GM12878 (cell line): ENCODE measurements at regions of chr14 and their contacts with region 1.

Region 1: DNA sequence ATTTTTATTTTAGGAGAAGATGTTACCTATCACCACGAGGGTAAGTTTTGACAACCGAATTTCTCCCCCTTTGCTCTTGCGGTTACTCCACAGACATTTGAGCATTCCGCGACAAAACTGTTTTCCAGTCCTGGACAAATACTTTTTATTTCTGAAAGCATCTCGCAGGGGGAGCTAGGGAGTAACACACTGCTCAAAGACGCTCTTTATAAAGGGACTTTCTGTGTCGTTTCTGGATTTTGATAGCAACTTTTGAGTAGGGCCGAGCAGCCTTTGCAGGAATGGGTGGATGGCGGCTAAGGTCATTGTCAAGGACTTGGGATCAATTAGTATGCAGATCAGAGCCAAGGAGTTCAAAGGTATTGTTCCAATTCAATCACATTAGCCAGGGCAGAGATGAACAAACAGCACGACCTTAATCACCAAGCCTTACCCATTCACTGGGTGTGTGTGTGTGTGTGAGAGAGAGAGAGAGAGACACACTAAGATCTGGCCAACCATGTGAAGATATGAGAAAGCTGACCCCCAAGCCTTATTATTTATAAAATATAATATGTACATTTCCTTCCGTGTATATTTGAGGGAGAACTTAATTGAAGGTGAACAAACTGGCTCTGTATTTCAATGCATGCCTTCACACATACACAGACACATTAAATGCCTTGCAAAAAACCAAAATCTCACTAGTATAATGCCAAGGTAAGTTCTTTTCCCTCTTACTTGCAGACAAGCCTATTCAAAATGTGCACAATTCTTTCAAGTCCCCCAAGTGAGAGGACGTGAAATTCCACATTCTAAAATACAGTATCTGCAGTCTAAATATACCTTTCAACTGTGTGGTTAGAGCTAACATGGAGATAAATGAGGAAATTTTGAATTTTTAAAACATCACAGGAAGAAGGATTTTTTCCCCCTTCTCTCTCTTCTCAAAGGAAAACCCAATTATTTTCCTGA is 613.8 kb downstream of the VRK1 start:
- DNase-seq: no peak
- ATAC-seq: peak; percentile 37; the same call in 2 of the 3 replicates
- H3K4me3 ChIP-seq: no peak overlapping the region
- H3K27ac ChIP-seq: peak overlapping the region; percentile 53
- H3K4me1 ChIP-seq: peaks cover 13% of the 10 kb centered on the region
- H3K27me3 ChIP-seq: no peaks in the 10 kb centered on the region
- CTCF ChIP-seq: peak in 2 of 3 experiments; percentile 2 to 26; a peak in 1 of 6 replicates
- EP300 ChIP-seq: no peak
- POLR2A ChIP-seq: no peak
- RAD21 ChIP-seq: peak; percentile 43; the same call in 1 of the 2 replicates

Region 2: GRCh38 chr14:97196336-97196735 is 214.6 kb before region 1 on chr14:
- CTCF ChIA-PET with region 1: no interaction called
- POLR2A ChIA-PET with region 1: no interaction called
- RAD21 ChIA-PET with region 1: no interaction called
- SMC1A ChIA-PET with region 1: no interaction called
- in situ Hi-C with region 1: no loop called
- intact Hi-C with region 1: no loop called
- DNase-seq: no peak
- ATAC-seq: no peak
- H3K4me3 ChIP-seq: no peak overlapping the region
- H3K27ac ChIP-seq: no peak overlapping the region
- H3K4me1 ChIP-seq: no peaks in the 10 kb centered on the region
- H3K27me3 ChIP-seq: no peaks in the 10 kb centered on the region
- CTCF ChIP-seq: no peak
- EP300 ChIP-seq: no peak
- POLR2A ChIP-seq: no peak
- RAD21 ChIP-seq: no peak

Region 3: DNA sequence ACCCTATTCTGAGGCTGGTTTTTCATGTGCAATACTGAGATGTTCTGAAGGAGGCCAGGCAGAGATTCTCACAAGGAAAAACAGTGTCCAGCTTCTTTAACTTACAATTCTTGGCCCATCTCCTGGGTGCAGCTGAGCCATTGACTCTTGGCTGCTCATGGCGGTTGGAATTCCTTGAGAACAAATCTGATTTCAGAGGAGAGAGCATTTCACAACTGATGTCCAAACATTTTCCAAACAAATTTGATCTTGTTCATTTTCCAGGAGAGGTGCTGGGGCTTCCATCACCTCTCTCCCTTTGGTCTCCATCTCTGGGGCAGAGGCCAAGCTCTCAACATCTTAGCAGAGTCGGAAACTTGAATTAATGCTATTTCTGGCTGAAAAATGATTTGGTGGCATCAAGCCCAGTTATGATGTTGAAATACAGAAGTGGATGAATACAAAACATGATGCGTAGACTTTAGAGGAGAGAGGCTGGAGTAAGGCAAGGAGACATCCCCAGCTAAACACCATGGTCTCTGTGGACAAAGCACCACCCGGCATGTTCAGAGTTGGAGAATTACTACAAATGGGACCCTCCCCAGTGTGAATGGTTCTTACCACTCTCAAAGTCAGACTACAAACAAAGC is 20.7 kb before region 1 on chr14:
- CTCF ChIA-PET with region 1: interaction called, 5 read pairs
- POLR2A ChIA-PET with region 1: interaction called, 15 read pairs
- RAD21 ChIA-PET with region 1: interaction called, 83 read pairs
- SMC1A ChIA-PET with region 1: interaction called, 115 read pairs
- in situ Hi-C with region 1: no loop called
- intact Hi-C with region 1: no loop called
- DNase-seq: no peak
- ATAC-seq: no peak
- H3K4me3 ChIP-seq: no peak overlapping the region
- H3K27ac ChIP-seq: no peak overlapping the region
- H3K4me1 ChIP-seq: peaks cover 13% of the 10 kb centered on the region; the same call in 1 of the 2 replicates
- H3K27me3 ChIP-seq: no peaks in the 10 kb centered on the region
- CTCF ChIP-seq: no peak
- EP300 ChIP-seq: no peak
- POLR2A ChIP-seq: no peak
- RAD21 ChIP-seq: no peak

Region 4: DNA sequence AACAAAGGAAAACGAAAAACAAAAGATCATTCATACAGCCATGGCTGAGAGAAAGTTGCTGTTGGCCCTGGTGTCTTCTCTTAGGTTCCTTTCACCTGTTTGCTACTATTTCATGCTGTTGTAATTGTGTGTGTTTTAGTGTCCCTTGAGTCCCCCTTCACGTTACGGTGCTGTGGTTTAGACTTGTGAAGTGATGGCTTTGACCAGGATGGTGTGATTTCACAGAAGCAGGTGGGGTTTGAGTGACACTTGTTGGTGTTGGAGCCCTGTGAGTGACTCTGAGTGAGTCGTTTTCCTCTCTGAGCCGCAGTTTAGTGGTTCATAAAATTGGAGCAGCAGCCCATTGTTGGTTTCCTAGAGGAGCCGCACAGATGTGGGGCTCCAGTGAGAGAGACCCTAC is 21.6 kb after region 1 on chr14:
- CTCF ChIA-PET with region 1: interaction called, 4 read pairs
- POLR2A ChIA-PET with region 1: interaction called, 5 read pairs
- RAD21 ChIA-PET with region 1: interaction called, 29 read pairs
- SMC1A ChIA-PET with region 1: interaction called, 88 read pairs
- in situ Hi-C with region 1: no loop called
- intact Hi-C with region 1: no loop called
- DNase-seq: no peak
- ATAC-seq: peak; percentile 58
- H3K4me3 ChIP-seq: no peak overlapping the region
- H3K27ac ChIP-seq: no peak overlapping the region
- H3K4me1 ChIP-seq: no peaks in the 10 kb centered on the region
- H3K27me3 ChIP-seq: no peaks in the 10 kb centered on the region
- CTCF ChIP-seq: no peak
- EP300 ChIP-seq: 0 out of 4 replicates have a peak, but pooled peaks of 1 of the 2 experiments have one; percentile 58
- POLR2A ChIP-seq: no peak
- RAD21 ChIP-seq: no peak

Region 5: GRCh38 chr14:97544571-97544970 is 133.6 kb after region 1 on chr14:
- CTCF ChIA-PET with region 1: no interaction called
- POLR2A ChIA-PET with region 1: no interaction called
- RAD21 ChIA-PET with region 1: interaction called, 3 read pairs
- SMC1A ChIA-PET with region 1: interaction called, 5 read pairs
- in situ Hi-C with region 1: no loop called
- intact Hi-C with region 1: loop called (anchors 10 kb)
- DNase-seq: peak; percentile 21
- ATAC-seq: peak; percentile 68
- H3K4me3 ChIP-seq: no peak overlapping the region
- H3K27ac ChIP-seq: peak overlapping the region; percentile 9; the same call in 1 of the 2 replicates
- H3K4me1 ChIP-seq: peaks cover 6% of the 10 kb centered on the region
- H3K27me3 ChIP-seq: no peaks in the 10 kb centered on the region
- CTCF ChIP-seq: no peak
- EP300 ChIP-seq: peak in 1 of 2 experiments; percentile 47; a peak in 1 of 4 replicates
- POLR2A ChIP-seq: no peak
- RAD21 ChIP-seq: no peak